PC-3 (cell line): ENCODE measurements at regions of chr5 and their contacts with region 1.

Region 1: GRCh38 chr5:176447982-176448608 is at the start of gene FAF2:
- DNase-seq: peak; percentile 99
- ATAC-seq: peak; percentile 94
- H3K4me3 ChIP-seq: peak within 1 kb of the TSS; percentile 88
- H3K27ac ChIP-seq: peak within 1 kb of the TSS; percentile 79
- H3K4me1 ChIP-seq: peaks cover 15% of the 10 kb centered on the region
- H3K27me3 ChIP-seq: no peaks in the 10 kb centered on the region
- CTCF ChIP-seq: peak; percentile 96
- total RNA-seq, gene FAF2: 51.4 TPM in 2 replicates

Region 2: DNA sequence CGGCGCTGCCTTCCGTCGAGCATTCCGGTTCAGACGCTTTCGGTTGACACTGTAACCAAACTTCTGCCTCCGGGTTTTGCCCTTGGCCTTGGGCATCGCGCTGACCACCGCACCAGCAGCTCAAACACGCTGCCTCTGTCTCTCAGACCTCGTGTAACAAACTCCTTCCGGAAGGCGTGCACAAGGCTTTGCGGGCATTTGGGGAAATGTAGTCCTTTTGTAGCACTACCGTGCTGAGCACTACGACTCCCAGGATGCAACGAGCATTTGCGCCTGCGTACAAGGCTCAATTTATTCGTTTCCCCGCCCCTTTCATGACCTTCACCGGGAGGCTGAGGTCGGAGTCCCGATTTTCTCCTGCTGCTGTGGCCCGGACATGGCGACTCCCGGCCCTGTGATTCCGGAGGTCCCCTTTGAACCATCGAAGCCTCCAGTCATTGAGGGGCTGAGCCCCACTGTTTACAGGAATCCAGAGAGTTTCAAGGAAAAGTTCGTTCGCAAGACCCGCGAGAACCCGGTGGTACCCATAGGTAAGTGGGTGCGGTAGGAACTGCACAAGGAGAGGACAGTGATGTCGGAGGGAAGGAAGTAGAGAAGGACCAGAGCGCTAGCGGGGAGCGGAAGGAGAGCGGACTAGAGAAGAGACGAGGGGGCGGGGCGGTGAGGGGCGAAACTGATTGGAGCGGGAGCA is 59.5 kb before region 1 on chr5 and contains the starts of genes HIGD2A and NOP16:
- CTCF ChIA-PET with region 1: no interaction called
- POLR2A ChIA-PET with region 1: no interaction called
- intact Hi-C with region 1: loop called (anchors 1 kb)
- DNase-seq: peak; percentile 99
- ATAC-seq: peak; percentile 83
- H3K4me3 ChIP-seq: peak within 1 kb of the TSS; percentile 94
- H3K27ac ChIP-seq: peak within 1 kb of the TSS; percentile 94
- H3K4me1 ChIP-seq: peaks cover 14% of the 10 kb centered on the region
- H3K27me3 ChIP-seq: no peaks in the 10 kb centered on the region
- CTCF ChIP-seq: no peak
- total RNA-seq, gene HIGD2A: 164 and 174 TPM in 2 replicates
- total RNA-seq, gene NOP16: 92.6 and 103 TPM in 2 replicates

Region 3: GRCh38 chr5:176405656-176406427 is 42.3 kb before region 1 on chr5:
- CTCF ChIA-PET with region 1: interaction called, 10 read pairs
- POLR2A ChIA-PET with region 1: no interaction called
- intact Hi-C with region 1: no loop called
- DNase-seq: no peak
- ATAC-seq: 0 out of 2 replicates have a peak, but pooled peaks have one; percentile 12
- H3K4me3 ChIP-seq: no peak overlapping the region
- H3K27ac ChIP-seq: 0 out of 2 replicates have a peak overlapping the region, but pooled peaks have one; percentile 19
- H3K4me1 ChIP-seq: peaks cover 31% of the 10 kb centered on the region
- H3K27me3 ChIP-seq: no peaks in the 10 kb centered on the region
- CTCF ChIP-seq: peak; percentile 28; the same call in 1 of the 2 replicates

Region 4: GRCh38 chr5:176415952-176416924 is 31.9 kb before region 1 on chr5 and contains the start of gene CLTB:
- CTCF ChIA-PET with region 1: interaction called, 14 read pairs
- POLR2A ChIA-PET with region 1: interaction called, 4 read pairs
- intact Hi-C with region 1: loop called (anchors 1 kb)
- DNase-seq: peak; percentile 93
- ATAC-seq: peak; percentile 83
- H3K4me3 ChIP-seq: peak within 1 kb of the TSS; percentile 94
- H3K27ac ChIP-seq: peak within 1 kb of the TSS; percentile 69
- H3K4me1 ChIP-seq: peaks cover 59% of the 10 kb centered on the region
- H3K27me3 ChIP-seq: no peaks in the 10 kb centered on the region
- CTCF ChIP-seq: peak; percentile 58
- total RNA-seq, gene CLTB: 354 and 460 TPM in 2 replicates

Region 5: GRCh38 chr5:176490301-176490700 is 42.2 kb after region 1 on chr5:
- CTCF ChIA-PET with region 1: interaction called, 6 read pairs
- POLR2A ChIA-PET with region 1: interaction called, 4 read pairs
- intact Hi-C with region 1: loop called (anchors 2 kb)
- DNase-seq: peak; percentile 44
- ATAC-seq: peak; percentile 21
- H3K4me3 ChIP-seq: peak overlapping the region; percentile 12; the same call in 1 of the 2 replicates
- H3K27ac ChIP-seq: peak overlapping the region; percentile 65
- H3K4me1 ChIP-seq: peaks cover 47% of the 10 kb centered on the region
- H3K27me3 ChIP-seq: no peaks in the 10 kb centered on the region
- CTCF ChIP-seq: peak; percentile 40

Region 6: DNA sequence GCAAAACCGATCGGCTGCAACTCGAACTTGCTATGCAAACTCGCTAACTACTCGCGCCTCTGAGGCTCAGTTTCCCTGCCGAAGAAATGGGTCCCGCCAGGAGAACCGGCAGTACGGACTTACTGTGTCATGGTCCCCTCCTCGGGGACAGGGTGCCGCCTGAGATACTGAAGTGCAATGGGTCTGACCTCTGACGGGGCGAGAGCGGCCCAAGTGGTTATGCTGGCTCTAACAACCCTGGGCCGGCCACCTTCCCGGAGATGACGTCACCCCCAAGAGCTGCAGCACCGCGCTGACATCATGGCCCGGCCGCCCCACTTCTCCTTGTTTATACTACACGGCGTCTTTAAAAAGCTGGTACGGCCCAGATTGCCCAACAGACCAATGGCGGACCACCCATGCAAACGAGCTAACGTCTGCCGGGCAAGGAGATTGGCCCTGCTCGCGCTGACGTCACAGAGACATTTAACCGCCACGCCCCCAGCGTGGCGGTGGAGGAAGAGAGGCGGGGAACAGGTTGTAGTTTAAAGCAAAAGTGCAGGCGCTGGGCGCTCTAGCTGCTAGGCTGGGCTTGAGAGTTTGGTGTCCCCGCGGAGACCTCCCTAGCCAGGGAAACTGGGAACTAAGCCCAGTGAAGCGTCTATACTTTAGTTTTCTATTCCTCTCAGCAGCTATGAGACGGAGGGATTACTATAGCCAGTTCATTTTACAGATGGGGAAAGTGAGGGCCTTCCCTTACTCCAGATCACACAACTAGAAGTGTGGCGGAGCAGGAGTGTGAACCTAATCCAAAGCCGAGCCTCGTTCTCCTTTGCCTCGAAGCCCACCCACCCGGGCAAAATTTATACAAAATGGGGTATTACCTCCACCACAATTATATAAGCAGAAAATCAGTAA is 89.8 kb after region 1 on chr5:
- CTCF ChIA-PET with region 1: interaction called, 13 read pairs
- POLR2A ChIA-PET with region 1: interaction called, 9 read pairs
- intact Hi-C with region 1: loop called (anchors 1 kb)
- DNase-seq: peak; percentile 99
- ATAC-seq: peak; percentile 75
- H3K4me3 ChIP-seq: peak overlapping the region; percentile 93
- H3K27ac ChIP-seq: peak overlapping the region; percentile 74
- H3K4me1 ChIP-seq: peaks cover 48% of the 10 kb centered on the region
- H3K27me3 ChIP-seq: no peaks in the 10 kb centered on the region
- CTCF ChIP-seq: no peak

Region 7: DNA sequence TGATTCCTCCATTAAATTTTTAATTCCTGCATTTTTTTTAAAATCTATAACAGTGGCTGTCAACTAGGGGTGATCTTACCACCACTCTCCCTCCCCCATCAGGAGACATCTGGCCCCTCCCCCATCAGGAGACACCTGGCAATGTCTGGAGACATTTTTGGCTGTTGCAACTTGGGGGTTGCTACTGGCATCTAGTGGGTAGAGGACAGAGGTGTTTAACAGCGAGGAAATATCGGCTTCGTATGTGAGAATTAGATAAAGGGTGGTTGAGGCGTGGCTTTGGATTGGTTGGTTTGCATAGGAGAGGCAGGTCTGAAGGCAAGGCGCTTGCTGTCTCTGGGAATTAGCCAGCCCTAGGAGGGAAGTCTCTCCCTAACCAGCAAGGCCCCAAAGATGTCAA is 111.6 kb after region 1 on chr5:
- CTCF ChIA-PET with region 1: no interaction called
- POLR2A ChIA-PET with region 1: no interaction called
- intact Hi-C with region 1: no loop called
- DNase-seq: peak; percentile 33
- ATAC-seq: no peak
- H3K4me3 ChIP-seq: no peak overlapping the region
- H3K27ac ChIP-seq: no peak overlapping the region
- H3K4me1 ChIP-seq: peaks cover 10% of the 10 kb centered on the region
- H3K27me3 ChIP-seq: no peaks in the 10 kb centered on the region
- CTCF ChIP-seq: peak; percentile 44